ENCODE measurements at regions of chr11 and their contacts with region 1.

Region 1: DNA sequence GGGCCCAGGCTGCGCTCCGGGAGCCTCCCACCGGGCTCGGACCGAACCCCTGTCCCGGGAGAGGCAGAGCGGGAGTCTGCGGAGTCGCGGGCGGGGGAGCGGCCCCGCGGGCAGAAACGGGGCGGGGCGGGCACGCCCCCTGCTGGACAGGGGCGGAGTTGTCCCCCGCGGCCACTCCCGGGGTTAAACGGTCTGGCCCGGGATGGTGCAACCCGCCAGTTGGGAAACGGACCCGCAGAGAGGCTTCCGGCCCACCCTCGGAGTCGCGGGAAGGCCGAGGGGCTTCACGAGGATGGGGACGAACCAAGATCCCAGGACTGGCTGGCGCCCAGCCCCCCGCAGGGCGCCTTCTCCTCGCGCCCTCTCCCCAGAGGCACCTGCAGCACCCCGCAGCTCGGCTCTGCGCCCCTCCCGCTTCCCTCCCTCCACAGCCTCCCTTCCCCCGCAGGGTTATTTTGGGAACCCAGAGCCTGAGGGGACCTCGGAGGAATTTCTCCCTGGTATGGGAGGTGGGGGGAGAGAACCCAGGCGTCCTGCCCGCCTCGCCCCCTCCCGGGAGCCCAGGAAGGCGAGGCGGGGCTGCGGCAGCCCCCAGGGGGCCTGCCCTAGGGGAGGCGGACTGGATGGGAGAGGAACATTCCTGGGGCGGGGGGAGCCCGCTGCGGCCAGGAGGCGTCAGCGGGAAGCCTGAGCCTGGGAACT is 902 bp downstream of the RASGRP2 start:
- DNase-seq: peak; percentile 80 to 94 (median 90)
- ATAC-seq: peak; percentile 73
- H3K4me3 ChIP-seq: peak overlapping the region; percentile 54
- H3K27ac ChIP-seq: peak overlapping the region; percentile 42; the same call in 2 of the 3 replicates
- H3K4me1 ChIP-seq: peaks cover 12 to 71% of the 10 kb centered on the region in 2 experiments; a peak in 3 of 5 replicates
- H3K27me3 ChIP-seq: no peaks in the 10 kb centered on the region; a peak in 1 of 5 replicates
- CTCF ChIP-seq: peak; percentile 73 to 85 (median 81)
- EP300 ChIP-seq: no peak; the same call in 1 of the 2 replicates
- POLR2A ChIP-seq: no peak
- RAD21 ChIP-seq: peak; percentile 47 to 51; a peak in 3 of 4 replicates

Region 2: GRCh38 chr11:64659417-64660144 is 83.5 kb before region 1 on chr11:
- CTCF ChIA-PET with region 1: interaction called, 4 read pairs
- POLR2A ChIA-PET with region 1: no interaction called
- in situ Hi-C with region 1: loop called (anchors 5 kb)
- intact Hi-C with region 1: loop called (anchors 5 kb)
- DNase-seq: peak; percentile 73 to 87 (median 79)
- ATAC-seq: peak; percentile 88
- H3K4me3 ChIP-seq: no peak overlapping the region
- H3K27ac ChIP-seq: peak overlapping the region; percentile 82
- H3K4me1 ChIP-seq: peaks cover 38 to 42% of the 10 kb centered on the region in 2 experiments
- H3K27me3 ChIP-seq: no peaks in the 10 kb centered on the region
- CTCF ChIP-seq: peak in 2 of 3 experiments; percentile 37 to 54; a peak in 3 of 6 replicates
- EP300 ChIP-seq: peak; percentile 79
- POLR2A ChIP-seq: peak; percentile 60; the same call in 1 of the 2 replicates
- RAD21 ChIP-seq: peak; percentile 20 to 61; a peak in 3 of 4 replicates

Region 3: GRCh38 chr11:64688534-64688982 is 54.5 kb before region 1 on chr11:
- CTCF ChIA-PET with region 1: interaction called, 13 read pairs
- POLR2A ChIA-PET with region 1: no interaction called
- in situ Hi-C with region 1: no loop called
- intact Hi-C with region 1: loop called (anchors 2 kb)
- DNase-seq: peak; percentile 88 to 94 (median 91)
- ATAC-seq: peak; percentile 99
- H3K4me3 ChIP-seq: peak overlapping the region; percentile 35
- H3K27ac ChIP-seq: no peak overlapping the region
- H3K4me1 ChIP-seq: peaks cover 0 to 6% of the 10 kb centered on the region in 2 experiments; a peak in 2 of 5 replicates
- H3K27me3 ChIP-seq: peaks cover 21 to 62% of the 10 kb centered on the region in 2 experiments
- CTCF ChIP-seq: peak; percentile 94 to 97 (median 97)
- EP300 ChIP-seq: peak; percentile 39; the same call in 1 of the 2 replicates
- POLR2A ChIP-seq: no peak
- RAD21 ChIP-seq: peak; percentile 81 to 82

Region 4: DNA sequence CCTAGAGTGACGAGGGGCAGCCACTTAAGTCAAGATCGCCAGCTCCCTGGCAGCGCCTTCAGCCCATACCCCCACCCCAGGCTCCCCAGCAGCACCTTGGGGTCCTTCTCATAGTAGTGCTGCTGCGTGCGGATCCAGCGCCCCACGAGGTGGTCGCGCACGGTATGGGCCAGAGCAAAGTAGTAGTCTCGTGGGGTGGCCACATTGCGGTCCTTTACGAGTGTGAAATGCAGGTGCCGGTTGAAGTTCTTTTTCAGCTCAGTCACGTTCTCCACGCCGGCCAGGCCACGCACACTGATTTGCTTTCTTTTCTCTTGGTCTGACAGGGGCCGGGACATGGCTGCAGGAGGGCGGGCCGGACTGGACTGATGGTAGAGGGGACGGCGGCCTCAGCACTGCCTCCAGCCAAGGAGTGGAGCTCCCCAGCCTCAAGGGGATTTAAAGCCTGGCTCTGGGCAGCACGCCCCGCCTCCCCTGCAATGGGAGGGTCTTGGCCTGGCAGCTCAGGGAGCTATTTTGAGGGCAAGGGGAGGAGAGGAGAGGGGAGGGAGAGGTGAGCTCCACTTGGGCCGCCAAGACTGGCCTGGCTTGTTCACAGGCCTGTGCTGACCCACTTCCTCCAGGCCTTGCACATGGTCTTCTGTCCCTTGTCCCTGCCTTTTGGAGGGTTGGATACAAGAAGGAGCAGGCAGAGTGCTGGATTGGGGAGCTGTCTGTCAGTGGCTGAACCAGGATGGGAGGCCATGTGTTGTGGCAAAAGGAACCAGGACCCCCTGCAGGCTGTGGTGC is 16.7 kb after region 1 on chr11 and contains the start of gene PYGM:
- CTCF ChIA-PET with region 1: no interaction called
- POLR2A ChIA-PET with region 1: interaction called, 18 read pairs
- in situ Hi-C with region 1: no loop called
- intact Hi-C with region 1: no loop called
- DNase-seq: peak in 1 of 4 experiments; percentile 17
- ATAC-seq: peak; percentile 1; the same call in 2 of the 3 replicates
- H3K4me3 ChIP-seq: no peak within 1 kb of the TSS
- H3K27ac ChIP-seq: no peak within 1 kb of the TSS
- H3K4me1 ChIP-seq: peaks cover 20 to 70% of the 10 kb centered on the region in 2 experiments
- H3K27me3 ChIP-seq: no peaks in the 10 kb centered on the region
- CTCF ChIP-seq: no peak
- EP300 ChIP-seq: no peak
- POLR2A ChIP-seq: no peak
- RAD21 ChIP-seq: no peak
- polyA plus RNA-seq, gene PYGM: 0.07 to 0.11 TPM

Region 5: GRCh38 chr11:64767344-64768299 is 24.6 kb after region 1 on chr11:
- CTCF ChIA-PET with region 1: interaction called, 3 read pairs
- POLR2A ChIA-PET with region 1: interaction called, 14 read pairs
- in situ Hi-C with region 1: no loop called
- intact Hi-C with region 1: loop called (anchors 1 kb)
- DNase-seq: peak in 2 of 4 experiments; percentile 47 to 79
- ATAC-seq: peak; percentile 67
- H3K4me3 ChIP-seq: no peak overlapping the region
- H3K27ac ChIP-seq: no peak overlapping the region
- H3K4me1 ChIP-seq: peaks cover 9 to 27% of the 10 kb centered on the region in 2 experiments
- H3K27me3 ChIP-seq: no peaks in the 10 kb centered on the region
- CTCF ChIP-seq: peak; percentile 63 to 88 (median 67)
- EP300 ChIP-seq: no peak
- POLR2A ChIP-seq: peak; percentile 61; the same call in 1 of the 2 replicates
- RAD21 ChIP-seq: peak; percentile 13 to 46; a peak in 3 of 4 replicates

Region 6: DNA sequence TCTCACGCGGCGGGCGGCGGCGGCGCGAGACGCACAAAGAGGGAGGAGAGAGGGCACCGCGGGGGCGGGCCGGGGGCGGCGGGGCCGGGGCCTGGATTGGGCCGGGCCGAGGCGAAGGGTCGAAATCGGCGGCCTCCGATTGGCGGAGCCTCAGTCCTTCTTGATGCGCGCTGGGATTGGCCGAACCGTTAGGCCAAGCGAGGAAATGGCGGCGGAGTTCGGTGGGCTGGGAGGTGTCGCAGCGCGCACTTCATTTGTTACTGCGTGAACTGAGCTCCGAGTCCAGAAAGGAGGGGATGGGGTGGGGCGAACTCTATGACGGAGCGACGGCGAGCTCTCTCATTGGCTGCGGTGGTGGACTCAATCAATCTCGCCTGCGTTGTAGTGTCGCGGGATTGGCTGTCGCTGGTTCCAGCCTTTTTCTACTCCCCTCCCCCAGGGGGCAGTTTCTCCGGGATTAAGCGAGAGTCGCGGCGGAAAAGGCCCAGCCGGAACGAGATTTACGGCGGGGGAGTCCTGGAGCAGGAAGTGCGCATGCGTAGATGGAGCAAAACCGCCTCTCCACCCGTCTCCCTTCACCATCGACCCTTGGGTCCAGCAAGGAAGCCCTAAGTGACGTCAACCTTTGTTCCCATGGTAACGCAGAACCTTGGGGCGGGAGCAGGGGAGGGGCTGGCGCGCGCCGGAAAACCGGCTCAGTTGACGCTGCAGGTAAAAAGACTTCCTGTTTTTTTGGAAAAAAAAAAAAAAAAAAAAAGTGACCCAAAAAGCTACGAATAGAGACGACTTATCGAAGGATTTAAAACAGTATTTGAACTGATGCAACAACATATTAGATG is 35.7 kb after region 1 on chr11 and contains the start of gene SF1:
- CTCF ChIA-PET with region 1: no interaction called
- POLR2A ChIA-PET with region 1: interaction called, 4 read pairs
- in situ Hi-C with region 1: no loop called
- intact Hi-C with region 1: loop called (anchors 1 kb)
- DNase-seq: peak; percentile 96 to 100 (median 98)
- ATAC-seq: peak; percentile 97
- H3K4me3 ChIP-seq: peak within 1 kb of the TSS; percentile 67
- H3K27ac ChIP-seq: peak within 1 kb of the TSS; percentile 97
- H3K4me1 ChIP-seq: peaks cover 6 to 18% of the 10 kb centered on the region in 2 experiments; a peak in 3 of 5 replicates
- H3K27me3 ChIP-seq: no peaks in the 10 kb centered on the region
- CTCF ChIP-seq: peak; percentile 13 to 42 (median 17); a peak in 3 of 6 replicates
- EP300 ChIP-seq: peak; percentile 54
- POLR2A ChIP-seq: peak; percentile 89
- RAD21 ChIP-seq: no peak
- polyA plus RNA-seq, gene SF1: 13.1 to 14.0 TPM

Region 7: DNA sequence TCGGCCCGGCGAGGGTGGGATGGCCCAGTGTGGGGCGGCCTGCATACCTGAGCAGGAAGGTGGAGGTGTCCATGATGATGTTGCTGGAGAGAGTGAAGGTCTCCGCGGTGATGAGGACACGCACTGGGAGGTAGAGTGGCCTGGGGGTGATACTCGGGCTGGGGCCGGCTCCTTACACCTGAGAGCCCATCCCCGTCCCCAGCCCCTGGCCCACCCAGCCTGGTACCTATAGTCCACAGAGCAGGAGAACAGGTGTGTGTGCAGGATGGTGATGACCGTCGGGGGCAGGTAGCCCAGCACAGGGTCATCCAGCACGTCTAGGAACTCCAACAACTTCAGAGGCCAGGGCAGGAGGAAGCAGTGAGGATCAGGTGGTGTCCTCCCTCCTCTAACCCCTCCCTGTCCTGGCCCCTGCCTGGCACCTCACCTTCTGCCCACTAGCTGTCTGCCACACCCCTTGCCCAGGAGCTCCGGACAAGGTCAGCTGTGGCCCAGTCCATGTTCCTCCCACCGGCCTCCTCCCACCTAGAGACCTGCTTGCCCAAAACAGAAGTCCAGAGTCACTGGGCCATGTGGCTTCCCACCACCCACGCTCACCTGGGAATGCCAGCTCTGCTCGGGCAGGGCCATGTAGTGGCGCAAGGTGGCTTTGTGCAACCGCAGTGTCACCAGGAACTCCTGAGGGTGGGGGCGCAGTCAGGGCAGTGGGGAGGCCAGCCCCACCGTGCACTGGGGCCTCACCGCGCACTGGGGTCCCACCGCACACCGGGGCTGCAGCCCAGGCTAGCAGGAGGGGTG is 162.7 kb after region 1 on chr11:
- CTCF ChIA-PET with region 1: no interaction called
- POLR2A ChIA-PET with region 1: no interaction called
- in situ Hi-C with region 1: no loop called
- intact Hi-C with region 1: no loop called
- DNase-seq: no peak
- ATAC-seq: no peak
- H3K4me3 ChIP-seq: no peak overlapping the region
- H3K27ac ChIP-seq: no peak overlapping the region
- H3K4me1 ChIP-seq: peaks cover 0 to 24% of the 10 kb centered on the region in 2 experiments; a peak in 2 of 5 replicates
- H3K27me3 ChIP-seq: no peaks in the 10 kb centered on the region
- CTCF ChIP-seq: no peak
- EP300 ChIP-seq: no peak
- POLR2A ChIP-seq: no peak
- RAD21 ChIP-seq: no peak